G401 (cell line): ENCODE measurements at regions of chr6 and their contacts with region 1.

Region 1: DNA sequence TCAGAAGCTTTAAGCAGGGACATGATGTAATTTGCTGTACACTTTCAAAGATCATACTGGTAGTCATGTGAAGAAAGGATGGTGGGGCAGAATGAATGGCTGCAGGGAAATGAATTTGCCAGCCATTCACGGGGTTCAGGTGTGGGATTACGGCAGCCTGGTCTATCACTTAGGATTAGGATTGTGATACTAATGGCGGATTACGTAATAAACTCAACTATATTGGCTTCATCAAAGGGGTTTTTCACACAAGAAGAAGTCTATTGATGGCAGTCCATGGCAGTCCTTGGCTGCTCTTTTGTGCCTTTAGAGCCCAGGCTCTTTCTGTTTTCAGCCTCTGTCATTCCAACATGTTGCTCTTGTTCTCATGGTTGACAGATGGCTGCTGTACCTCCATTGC is 12.6 kb upstream of the EEF1E1 start:
- DNase-seq: no peak

Region 2: DNA sequence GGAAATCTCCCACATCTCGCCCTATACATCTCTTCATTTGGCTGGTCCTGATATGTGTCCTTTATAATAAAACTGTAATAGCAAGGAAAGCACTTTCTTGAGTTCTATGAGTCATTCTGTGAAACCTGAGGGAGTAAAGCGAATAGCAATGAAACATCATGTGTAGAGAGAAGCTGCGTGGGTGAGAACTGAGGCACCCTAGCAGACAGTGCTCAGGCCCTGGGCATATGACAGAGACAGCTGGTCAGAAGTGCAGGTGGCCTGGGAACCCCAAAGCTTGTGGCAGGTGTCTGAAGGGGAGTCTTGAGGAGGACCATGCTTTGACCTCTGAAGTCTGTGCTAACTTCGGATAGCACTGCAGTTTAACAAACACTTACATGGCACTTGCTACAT is 49.4 kb before region 1 on chr6:
- in situ Hi-C with region 1: loop called (anchors 5 kb)
- DNase-seq: no peak

Region 3: DNA sequence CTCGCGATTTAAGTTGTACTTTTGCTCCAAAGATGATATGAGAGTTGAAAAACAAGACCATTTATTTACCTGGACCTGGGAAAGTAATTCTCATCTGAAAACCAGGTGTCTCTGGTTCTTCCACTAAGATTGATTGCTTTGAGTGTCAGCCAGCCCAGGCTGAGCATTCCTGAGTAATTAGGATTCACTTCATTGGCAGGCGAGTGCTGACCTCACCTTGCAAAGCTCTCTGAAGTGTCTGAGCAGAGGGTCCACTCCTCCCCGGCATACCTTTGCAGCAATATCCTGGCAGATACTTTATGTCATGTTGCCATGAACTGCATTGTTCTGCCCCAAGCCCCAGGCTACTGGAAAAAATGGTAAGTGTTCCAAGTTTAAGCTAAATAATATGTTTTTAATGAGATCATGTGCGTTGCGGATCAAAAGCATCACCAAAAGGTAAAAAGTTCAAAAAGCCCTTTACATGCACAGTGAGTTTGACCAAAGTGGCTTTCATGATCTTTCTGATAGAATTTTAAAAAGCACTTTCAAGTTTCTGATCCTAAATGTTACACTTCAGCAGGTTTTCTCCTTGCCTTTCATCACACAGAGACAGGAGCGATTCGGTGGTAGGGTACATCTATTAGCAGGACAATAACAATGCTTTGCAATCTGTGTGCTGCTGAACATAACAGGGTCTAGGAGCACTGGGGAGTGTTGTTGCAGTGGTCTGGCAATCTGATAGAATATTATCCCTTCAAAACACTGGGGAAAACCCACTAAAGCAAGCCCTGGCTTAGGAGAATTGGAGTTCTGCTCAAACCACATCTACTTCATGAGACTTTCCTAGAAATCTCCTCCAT is 115.2 kb after region 1 on chr6:
- in situ Hi-C with region 1: no loop called
- DNase-seq: no peak